Esophagus muscularis mucosa (tissue), 4 donors: ENCODE measurements at regions of chr18 and their contacts with region 1.

Region 1: GRCh38 chr18:59459369-59460079 is 100.5 kb upstream of the LMAN1 start:
- DNase-seq: no peak
- H3K4me3 ChIP-seq: no peak overlapping the region
- H3K27ac ChIP-seq: no peak overlapping the region
- H3K4me1 ChIP-seq: peaks cover 4 to 10% (median 9%) of the 10 kb centered on the region in 4 donors
- H3K27me3 ChIP-seq: no peaks in the 10 kb centered on the region
- CTCF ChIP-seq: peak; percentile 54 to 64 (median 58)
- EP300 ChIP-seq: no peak
- POLR2A ChIP-seq: no peak

Region 2: GRCh38 chr18:59419386-59419785 is 40.1 kb before region 1 on chr18:
- intact Hi-C with region 1: no loop called
- DNase-seq: no peak
- H3K4me3 ChIP-seq: no peak overlapping the region
- H3K27ac ChIP-seq: no peak overlapping the region
- H3K4me1 ChIP-seq: peaks cover 0 to 8% (median 0%) of the 10 kb centered on the region in 4 donors
- H3K27me3 ChIP-seq: peaks cover 0 to 15% (median 0%) of the 10 kb centered on the region in 4 donors
- CTCF ChIP-seq: no peak
- EP300 ChIP-seq: no peak
- POLR2A ChIP-seq: no peak

Region 3: DNA sequence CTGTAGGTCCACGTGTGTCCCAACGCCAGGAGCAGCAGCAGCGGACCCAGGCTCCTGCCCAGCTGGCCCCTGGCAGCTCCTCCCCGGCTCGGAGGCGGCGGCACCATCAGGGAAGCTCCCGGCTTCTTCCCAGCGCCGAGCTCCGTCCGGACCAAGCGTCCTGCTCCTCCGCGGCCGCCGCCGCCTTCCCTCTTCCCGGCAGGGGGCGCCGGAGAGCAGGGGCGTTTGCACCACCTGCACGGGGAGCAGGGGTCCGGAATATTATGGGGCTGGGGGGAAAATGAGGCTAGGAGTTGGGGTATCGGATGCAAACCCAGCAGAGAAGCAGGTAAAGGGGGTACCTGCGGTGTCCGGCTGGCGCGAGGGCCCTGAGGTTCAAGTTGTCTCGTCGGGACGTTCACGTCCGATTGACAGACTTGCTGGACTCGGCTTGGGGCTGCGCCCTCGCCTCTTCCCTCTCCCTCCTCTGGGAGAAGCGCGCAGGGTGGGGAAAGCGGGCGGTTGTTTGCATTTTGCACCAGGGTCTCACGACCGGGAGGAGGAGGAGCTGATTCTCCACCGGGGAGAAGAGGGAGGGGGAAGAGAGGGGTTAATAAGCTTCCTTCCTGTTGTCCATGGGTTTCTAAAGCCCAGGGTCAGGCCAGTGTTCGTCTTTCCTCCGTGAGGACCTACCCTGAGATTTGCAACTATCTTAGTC is 237.9 kb after region 1 on chr18 and contains the start of gene CCBE1:
- intact Hi-C with region 1: loop called (anchors 5 kb)
- DNase-seq: no peak
- H3K4me3 ChIP-seq: peak within 1 kb of the TSS; percentile 54 to 67 (median 60)
- H3K27ac ChIP-seq: peak within 1 kb of the TSS in 1 of 4 donors; percentile 28
- H3K4me1 ChIP-seq: peaks cover 11 to 46% (median 33%) of the 10 kb centered on the region in 4 donors
- H3K27me3 ChIP-seq: peaks cover 0 to 26% (median 8%) of the 10 kb centered on the region in 4 donors
- CTCF ChIP-seq: peak; percentile 42 to 85 (median 71)
- EP300 ChIP-seq: no peak
- POLR2A ChIP-seq: no peak
- total RNA-seq, gene CCBE1: 1.6 to 11.1 (median 2.7) TPM